Naive thymus-derived CD4-positive, alpha-beta T cell (primary cell): ENCODE measurements at regions of chr20 and their contacts with region 1.

Region 1: GRCh38 chr20:41028348-41029148 is at the start of gene TOP1:
- DNase-seq: peak; percentile 98 to 100 (median 99)
- ATAC-seq: peak; percentile 99
- H3K4me3 ChIP-seq: peak within 1 kb of the TSS; percentile 58
- H3K4me3 Mint-ChIP-seq: peak within 1 kb of the TSS; percentile 79 to 96 (median 94)
- H3K27ac ChIP-seq: peak within 1 kb of the TSS; percentile 99
- H3K27ac Mint-ChIP-seq: peak within 1 kb of the TSS; percentile 88 to 97 (median 96)
- H3K4me1 ChIP-seq: peaks cover 32 to 38% of the 10 kb centered on the region in 2 donors
- H3K4me1 Mint-ChIP-seq: peaks cover 41 to 52% (median 48%) of the 10 kb centered on the region in 7 donors
- H3K27me3 ChIP-seq: no peaks in the 10 kb centered on the region
- H3K27me3 Mint-ChIP-seq: no peaks in the 10 kb centered on the region
- total RNA-seq, gene TOP1: 32.0 to 82.8 (median 43.4) TPM

Region 2: GRCh38 chr20:40689943-40690835 is 338.4 kb before region 1 on chr20:
- CTCF ChIA-PET with region 1: no interaction called
- POLR2A ChIA-PET with region 1: no interaction called
- intact Hi-C with region 1: no loop called
- DNase-seq: peak in 6 of 9 donors; percentile 23 to 77 (median 27)
- ATAC-seq: peak; percentile 45
- H3K4me3 ChIP-seq: no peak overlapping the region
- H3K4me3 Mint-ChIP-seq: peak overlapping the region; percentile 20 to 84 (median 66)
- H3K27ac ChIP-seq: no peak overlapping the region
- H3K27ac Mint-ChIP-seq: peak overlapping the region in 1 of 9 donors; percentile 65
- H3K4me1 ChIP-seq: no peaks in the 10 kb centered on the region
- H3K4me1 Mint-ChIP-seq: peaks cover 0 to 15% (median 6%) of the 10 kb centered on the region in 7 donors
- H3K27me3 ChIP-seq: peaks cover 2 to 4% of the 10 kb centered on the region in 2 donors
- H3K27me3 Mint-ChIP-seq: peaks cover 59 to 92% (median 75%) of the 10 kb centered on the region in 5 donors

Region 3: DNA sequence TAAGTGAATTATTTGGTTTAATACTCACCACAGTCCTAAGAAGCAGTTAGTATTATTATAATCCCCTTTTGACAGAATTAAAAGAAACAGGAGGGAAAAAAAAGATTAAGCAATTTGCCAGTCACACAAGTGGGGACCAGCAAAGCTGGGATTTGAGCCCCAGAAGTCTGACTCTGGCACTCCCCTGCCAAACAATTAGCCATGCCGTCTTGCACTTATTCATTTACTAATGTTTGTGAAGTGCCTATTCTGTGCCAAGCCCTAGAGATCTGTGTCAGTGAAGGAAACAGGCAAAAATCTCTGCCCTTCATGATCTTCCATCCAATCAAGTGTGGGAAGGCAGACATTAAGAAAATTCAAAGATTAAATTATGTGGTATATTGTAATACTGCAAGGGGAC is 125.9 kb before region 1 on chr20:
- CTCF ChIA-PET with region 1: no interaction called
- POLR2A ChIA-PET with region 1: no interaction called
- intact Hi-C with region 1: no loop called
- DNase-seq: no peak
- ATAC-seq: no peak
- H3K4me3 ChIP-seq: no peak overlapping the region
- H3K4me3 Mint-ChIP-seq: no peak overlapping the region
- H3K27ac ChIP-seq: no peak overlapping the region
- H3K27ac Mint-ChIP-seq: no peak overlapping the region
- H3K4me1 ChIP-seq: no peaks in the 10 kb centered on the region
- H3K4me1 Mint-ChIP-seq: no peaks in the 10 kb centered on the region
- H3K27me3 ChIP-seq: no peaks in the 10 kb centered on the region
- H3K27me3 Mint-ChIP-seq: peaks cover 0 to 24% (median 11%) of the 10 kb centered on the region in 5 donors

Region 4: GRCh38 chr20:41003143-41003883 is 25.2 kb before region 1 on chr20:
- CTCF ChIA-PET with region 1: no interaction called
- POLR2A ChIA-PET with region 1: no interaction called
- intact Hi-C with region 1: loop called (anchors 1 kb)
- DNase-seq: peak in 8 of 9 donors; percentile 15 to 73 (median 23)
- ATAC-seq: peak; percentile 85
- H3K4me3 ChIP-seq: peak overlapping the region; percentile 48
- H3K4me3 Mint-ChIP-seq: peak overlapping the region in 8 of 10 donors; percentile 39 to 77 (median 54)
- H3K27ac ChIP-seq: no peak overlapping the region
- H3K27ac Mint-ChIP-seq: peak overlapping the region; percentile 42 to 98 (median 68)
- H3K4me1 ChIP-seq: peaks cover 0 to 11% of the 10 kb centered on the region in 2 donors
- H3K4me1 Mint-ChIP-seq: peaks cover 8 to 41% (median 16%) of the 10 kb centered on the region in 7 donors
- H3K27me3 ChIP-seq: no peaks in the 10 kb centered on the region
- H3K27me3 Mint-ChIP-seq: no peaks in the 10 kb centered on the region

Region 5: DNA sequence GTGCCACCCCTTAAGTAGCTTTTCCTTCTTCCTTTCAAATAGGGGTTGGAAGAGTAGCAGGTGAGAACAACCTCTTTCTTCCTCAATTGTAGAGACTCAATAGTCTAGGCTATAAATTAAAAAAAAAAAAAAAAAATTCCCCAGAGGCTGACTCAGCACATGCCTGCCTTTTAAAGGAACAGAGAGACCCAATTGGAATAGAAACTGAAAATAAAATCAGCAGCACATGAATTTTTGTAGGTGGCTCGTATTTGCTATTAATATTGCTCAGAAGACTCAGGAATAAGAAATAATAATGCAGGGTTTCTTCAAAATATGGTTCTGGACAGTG is 19.4 kb after region 1 on chr20:
- CTCF ChIA-PET with region 1: interaction called, 3 read pairs
- POLR2A ChIA-PET with region 1: interaction called, 29 read pairs
- intact Hi-C with region 1: loop called (anchors 1 kb)
- DNase-seq: peak in 6 of 9 donors; percentile 23 to 40 (median 29)
- ATAC-seq: peak; percentile 77
- H3K4me3 ChIP-seq: peak overlapping the region; percentile 46
- H3K4me3 Mint-ChIP-seq: peak overlapping the region; percentile 70 to 93 (median 82)
- H3K27ac ChIP-seq: peak overlapping the region; percentile 62
- H3K27ac Mint-ChIP-seq: peak overlapping the region; percentile 74 to 94 (median 84)
- H3K4me1 ChIP-seq: peaks cover 46 to 59% of the 10 kb centered on the region in 2 donors
- H3K4me1 Mint-ChIP-seq: peaks cover 66 to 97% (median 90%) of the 10 kb centered on the region in 7 donors
- H3K27me3 ChIP-seq: no peaks in the 10 kb centered on the region
- H3K27me3 Mint-ChIP-seq: no peaks in the 10 kb centered on the region

Region 6: GRCh38 chr20:41317536-41318270 is 289.2 kb after region 1 on chr20 and contains the start of gene ZHX3:
- CTCF ChIA-PET with region 1: no interaction called
- POLR2A ChIA-PET with region 1: no interaction called
- intact Hi-C with region 1: loop called (anchors 1 kb)
- DNase-seq: peak; percentile 90 to 97 (median 95)
- ATAC-seq: peak; percentile 99
- H3K4me3 ChIP-seq: peak within 1 kb of the TSS; percentile 47
- H3K4me3 Mint-ChIP-seq: peak within 1 kb of the TSS; percentile 74 to 92 (median 84)
- H3K27ac ChIP-seq: peak within 1 kb of the TSS; percentile 75
- H3K27ac Mint-ChIP-seq: peak within 1 kb of the TSS; percentile 48 to 87 (median 84)
- H3K4me1 ChIP-seq: no peaks in the 10 kb centered on the region
- H3K4me1 Mint-ChIP-seq: peaks cover 11 to 34% (median 28%) of the 10 kb centered on the region in 7 donors
- H3K27me3 ChIP-seq: no peaks in the 10 kb centered on the region
- H3K27me3 Mint-ChIP-seq: peaks cover 0 to 7% (median 0%) of the 10 kb centered on the region in 5 donors
- total RNA-seq, gene ZHX3: 7.9 to 12.8 (median 9.8) TPM